WTC11 (cell line): ENCODE measurements at regions of chr22 and their contacts with region 1.

Region 1: GRCh38 chr22:22710719-22711531 is 66.5 kb downstream of the GGTLC2 start:
- DNase-seq: peak; percentile 83
- ATAC-seq: peak; percentile 77
- H3K4me3 Mint-ChIP-seq: no peak overlapping the region
- H3K27ac Mint-ChIP-seq: no peak overlapping the region
- H3K4me1 Mint-ChIP-seq: no peaks in the 10 kb centered on the region
- H3K27me3 Mint-ChIP-seq: peaks cover 99% of the 10 kb centered on the region
- CTCF ChIP-seq: peak; percentile 96

Region 2: DNA sequence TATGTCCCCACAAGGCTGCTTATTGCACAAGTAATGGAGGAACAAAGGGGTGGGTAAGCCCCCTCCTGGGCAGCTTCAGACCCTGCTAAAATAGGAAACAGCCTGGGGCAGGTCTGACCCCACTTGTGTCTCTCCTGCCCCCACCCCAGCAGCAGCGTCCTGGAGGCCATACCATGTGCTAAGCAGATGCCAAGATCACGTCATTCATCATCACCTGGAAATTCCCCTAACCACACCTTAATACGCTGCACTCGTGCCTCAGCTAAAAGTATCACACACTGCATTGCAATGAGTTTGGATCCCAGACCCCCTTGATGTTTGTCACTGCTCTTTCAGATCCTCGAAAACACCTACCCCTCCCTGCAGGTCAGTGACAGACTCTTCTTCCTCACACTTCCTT is 94.3 kb before region 1 on chr22:
- CTCF ChIA-PET with region 1: interaction called, 12 read pairs
- POLR2A ChIA-PET with region 1: no interaction called
- DNase-seq: no peak
- ATAC-seq: no peak
- H3K4me3 Mint-ChIP-seq: no peak overlapping the region
- H3K27ac Mint-ChIP-seq: no peak overlapping the region
- H3K4me1 Mint-ChIP-seq: peaks cover 6% of the 10 kb centered on the region
- H3K27me3 Mint-ChIP-seq: peaks cover 97% of the 10 kb centered on the region
- CTCF ChIP-seq: no peak

Region 3: DNA sequence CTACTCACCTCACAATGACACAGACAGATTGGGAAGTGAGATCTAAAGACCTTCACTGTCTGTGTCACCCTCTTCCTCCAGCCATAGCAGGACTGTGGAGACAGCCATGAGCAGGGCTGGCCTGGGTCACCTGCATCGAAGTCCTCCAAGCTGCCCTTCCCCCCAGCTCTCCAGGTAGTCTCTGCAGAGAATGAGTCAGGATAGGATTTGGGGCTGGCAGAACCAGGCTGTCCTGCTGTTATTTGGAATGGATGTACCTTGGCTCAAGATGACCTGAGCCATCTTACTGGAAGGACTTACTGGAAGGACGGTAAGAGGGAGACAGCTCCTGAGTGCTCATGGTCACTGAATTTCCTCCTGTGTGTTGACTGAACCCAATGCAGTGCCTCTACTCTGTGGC is 37.3 kb before region 1 on chr22:
- CTCF ChIA-PET with region 1: no interaction called
- POLR2A ChIA-PET with region 1: no interaction called
- DNase-seq: no peak
- ATAC-seq: no peak
- H3K4me3 Mint-ChIP-seq: no peak overlapping the region
- H3K27ac Mint-ChIP-seq: no peak overlapping the region
- H3K4me1 Mint-ChIP-seq: no peaks in the 10 kb centered on the region
- H3K27me3 Mint-ChIP-seq: peaks cover 100% of the 10 kb centered on the region
- CTCF ChIP-seq: no peak

Region 4: DNA sequence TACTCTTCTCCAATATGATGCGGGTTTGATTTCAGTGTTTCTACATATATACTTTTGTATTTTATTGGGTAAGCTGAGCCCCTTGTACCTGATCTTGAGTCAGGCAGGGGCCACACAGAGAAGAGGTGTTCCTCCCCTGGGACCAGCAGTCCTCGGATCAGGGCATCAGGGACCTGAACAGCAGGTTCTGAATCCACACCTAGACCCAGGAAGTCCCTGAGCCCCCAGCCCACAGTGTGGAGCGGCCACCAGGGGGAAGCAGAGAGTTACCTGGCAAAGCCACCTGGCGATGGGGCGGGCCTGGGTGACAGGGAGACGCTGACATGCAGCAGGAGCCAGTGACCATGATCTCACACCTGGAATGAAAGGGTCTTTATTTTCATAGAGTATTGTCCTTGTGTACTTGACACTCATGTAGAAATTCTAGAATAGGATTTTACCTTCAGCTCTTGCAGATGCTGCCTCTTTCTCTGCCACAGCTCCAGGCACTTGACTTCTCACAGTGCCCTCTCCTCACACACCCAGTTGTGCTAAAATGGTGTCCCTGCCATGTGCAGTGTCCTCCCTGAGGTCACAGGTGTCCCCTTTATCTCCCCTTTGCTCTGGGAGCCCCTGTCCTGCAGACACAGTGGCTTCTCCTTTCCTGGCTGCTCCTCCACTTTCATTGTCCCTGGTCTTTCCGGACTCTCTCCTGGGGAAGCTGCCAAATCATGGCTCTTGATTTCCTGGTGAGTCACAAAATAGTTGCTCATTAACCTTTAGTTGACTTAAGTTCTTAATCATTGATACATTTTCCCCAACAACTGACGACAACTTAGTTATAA is 18.0 kb before region 1 on chr22:
- CTCF ChIA-PET with region 1: interaction called, 27 read pairs
- POLR2A ChIA-PET with region 1: no interaction called
- DNase-seq: peak; percentile 80
- ATAC-seq: peak; percentile 88
- H3K4me3 Mint-ChIP-seq: no peak overlapping the region
- H3K27ac Mint-ChIP-seq: no peak overlapping the region
- H3K4me1 Mint-ChIP-seq: peaks cover 4% of the 10 kb centered on the region; the same call in 1 of the 2 replicates
- H3K27me3 Mint-ChIP-seq: peaks cover 98% of the 10 kb centered on the region
- CTCF ChIP-seq: no peak; the same call in 1 of the 2 replicates

Region 5: DNA sequence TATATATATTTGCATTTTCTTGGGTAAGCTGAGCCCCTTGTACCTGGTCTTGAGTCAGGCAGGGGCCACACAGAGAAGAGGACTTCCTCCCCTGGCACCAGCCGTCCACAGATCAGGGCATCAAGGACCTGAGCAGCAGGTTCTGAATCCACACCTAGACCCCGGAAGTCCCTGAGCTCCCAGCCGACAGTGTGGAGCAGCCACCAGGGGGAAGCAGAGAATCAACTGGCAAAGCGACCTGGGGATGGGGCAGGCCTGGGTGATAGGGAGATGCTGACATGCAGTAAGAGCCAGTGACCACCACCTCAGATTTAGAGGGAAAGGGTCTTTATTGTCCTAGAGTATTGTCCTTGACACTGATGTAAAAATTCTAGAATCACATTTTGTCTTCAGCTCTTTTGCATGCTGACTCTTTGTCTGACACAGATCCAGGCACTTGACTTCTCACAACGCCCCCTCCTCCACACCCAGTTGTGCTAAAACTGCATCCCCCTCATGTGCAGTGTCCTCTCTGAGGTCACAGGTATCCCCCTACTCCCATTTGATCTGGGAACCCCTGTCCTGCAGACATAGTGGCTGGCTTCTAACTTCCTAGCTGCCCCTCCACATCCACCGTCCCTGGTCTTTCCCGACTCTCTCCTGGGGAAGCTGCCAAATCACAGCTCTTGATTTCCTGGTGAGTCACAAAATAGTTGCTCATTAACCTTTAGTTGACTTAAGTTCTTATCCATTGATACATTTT is 42.8 kb after region 1 on chr22:
- CTCF ChIA-PET with region 1: interaction called, 14 read pairs
- POLR2A ChIA-PET with region 1: no interaction called
- DNase-seq: peak; percentile 83
- ATAC-seq: peak; percentile 97
- H3K4me3 Mint-ChIP-seq: no peak overlapping the region
- H3K27ac Mint-ChIP-seq: no peak overlapping the region
- H3K4me1 Mint-ChIP-seq: no peaks in the 10 kb centered on the region
- H3K27me3 Mint-ChIP-seq: peaks cover 96% of the 10 kb centered on the region
- CTCF ChIP-seq: peak; percentile 33; the same call in 1 of the 2 replicates